Panc1 (cell line): ENCODE measurements at regions of chr12 and their contacts with region 1.

Region 1: GRCh38 chr12:38906482-38907170 is 1.2 kb upstream of the CPNE8 start:
- DNase-seq: peak; percentile 69
- ATAC-seq: peak; percentile 84
- H3K4me3 ChIP-seq: peak overlapping the region; percentile 79 to 92
- H3K27ac ChIP-seq: peak overlapping the region; percentile 94
- H3K4me1 ChIP-seq: peaks cover 16% of the 10 kb centered on the region
- H3K27me3 ChIP-seq: no peaks in the 10 kb centered on the region
- CTCF ChIP-seq: peak; percentile 96

Region 2: DNA sequence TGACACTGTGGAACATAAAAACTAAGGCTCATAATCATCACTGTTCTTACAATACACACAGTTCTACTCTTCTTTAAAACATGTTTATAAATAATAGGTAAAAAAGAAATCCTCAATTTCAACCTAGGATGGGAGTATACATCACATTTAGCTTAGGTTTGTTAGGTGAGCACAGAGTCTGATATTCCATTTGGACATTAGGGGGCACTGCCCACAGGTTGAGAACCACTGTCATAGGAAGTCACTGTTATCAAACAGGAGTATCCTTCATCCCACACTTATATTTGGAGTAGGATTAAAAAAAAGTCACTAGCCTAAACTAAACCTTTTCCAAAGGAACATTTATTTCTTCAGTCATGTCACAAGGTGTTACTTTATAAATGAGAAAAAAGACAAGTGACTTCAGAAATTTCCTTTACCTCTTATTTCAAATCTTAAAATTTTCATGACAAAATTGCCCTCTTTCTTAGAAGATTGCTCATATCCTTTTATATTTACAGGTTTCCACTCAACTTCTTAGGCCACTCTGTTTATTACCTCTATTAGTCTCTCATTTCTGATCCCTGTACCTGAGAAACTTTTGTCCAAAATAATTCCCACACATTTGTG is 241.9 kb before region 1 on chr12:
- CTCF ChIA-PET with region 1: interaction called, 5 read pairs
- POLR2A ChIA-PET with region 1: no interaction called
- in situ Hi-C with region 1: no loop called
- intact Hi-C with region 1: loop called (anchors 10 kb)
- DNase-seq: no peak
- ATAC-seq: peak; percentile 75
- H3K4me3 ChIP-seq: no peak overlapping the region
- H3K27ac ChIP-seq: no peak overlapping the region
- H3K4me1 ChIP-seq: no peaks in the 10 kb centered on the region
- H3K27me3 ChIP-seq: no peaks in the 10 kb centered on the region
- CTCF ChIP-seq: peak; percentile 66; the same call in 1 of the 2 replicates

Region 3: GRCh38 chr12:38921025-38921677 is 14.5 kb after region 1 on chr12:
- CTCF ChIA-PET with region 1: interaction called, 10 read pairs
- POLR2A ChIA-PET with region 1: no interaction called
- in situ Hi-C with region 1: no loop called
- intact Hi-C with region 1: no loop called
- DNase-seq: peak; percentile 54
- ATAC-seq: peak; percentile 92
- H3K4me3 ChIP-seq: no peak overlapping the region
- H3K27ac ChIP-seq: no peak overlapping the region
- H3K4me1 ChIP-seq: no peaks in the 10 kb centered on the region
- H3K27me3 ChIP-seq: no peaks in the 10 kb centered on the region
- CTCF ChIP-seq: peak; percentile 74; the same call in 1 of the 2 replicates

Region 4: GRCh38 chr12:39272871-39273770 is 366.5 kb after region 1 on chr12:
- CTCF ChIA-PET with region 1: interaction called, 6 read pairs
- POLR2A ChIA-PET with region 1: interaction called, 14 read pairs
- in situ Hi-C with region 1: no loop called
- intact Hi-C with region 1: no loop called
- DNase-seq: peak; percentile 10
- ATAC-seq: no peak
- H3K4me3 ChIP-seq: no peak overlapping the region
- H3K27ac ChIP-seq: no peak overlapping the region
- H3K4me1 ChIP-seq: no peaks in the 10 kb centered on the region
- H3K27me3 ChIP-seq: no peaks in the 10 kb centered on the region
- CTCF ChIP-seq: peak; percentile 73